Kidney (tissue), 22 donors: ENCODE measurements at regions of chr15 and their contacts with region 1.

Region 1: GRCh38 chr15:70902107-70902506 is 9.5 kb downstream of the LRRC49 start:
- DNase-seq: no peak
- H3K4me3 ChIP-seq: no peak overlapping the region
- H3K27ac ChIP-seq: no peak overlapping the region
- H3K4me1 ChIP-seq: no peaks in the 10 kb centered on the region
- H3K27me3 ChIP-seq: no peaks in the 10 kb centered on the region
- CTCF ChIP-seq: no peak

Region 2: DNA sequence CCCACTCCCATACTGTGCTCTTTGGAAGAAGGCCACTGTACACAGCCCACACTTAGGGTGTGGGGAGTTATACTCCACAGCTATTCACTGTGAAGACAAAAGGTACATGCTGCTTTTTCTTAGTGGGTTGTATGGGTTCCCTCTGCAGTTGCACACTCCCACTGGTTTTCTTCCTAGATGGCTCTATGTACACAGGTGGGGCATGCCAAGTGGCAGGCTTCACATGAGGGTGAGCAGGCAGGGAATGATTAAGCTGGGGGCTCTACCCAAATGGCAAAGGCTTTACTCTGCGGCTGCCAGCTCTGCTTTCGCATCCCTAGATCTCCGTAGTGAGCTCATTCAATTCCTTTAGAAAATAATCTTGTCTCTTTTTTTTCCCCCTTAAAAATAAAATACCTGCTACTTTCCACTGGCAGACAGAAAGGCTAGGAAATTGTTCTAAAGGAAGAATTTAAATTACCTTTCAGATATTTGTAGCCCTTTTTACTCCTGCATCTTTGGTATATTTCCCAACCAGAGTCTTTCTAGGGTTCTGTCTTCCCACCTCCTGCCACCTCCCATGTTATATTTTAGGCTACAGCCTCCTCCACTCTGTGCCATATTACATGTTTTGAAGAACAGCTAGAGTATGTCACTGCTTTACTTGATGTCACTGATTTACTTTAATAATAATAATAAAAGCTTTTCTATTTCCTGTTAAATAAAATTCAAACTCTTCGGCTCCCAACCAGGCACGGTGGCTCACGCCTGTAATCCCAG is 56.3 kb before region 1 on chr15:
- intact Hi-C with region 1: loop called (anchors 10 kb)
- DNase-seq: no peak
- H3K4me3 ChIP-seq: no peak overlapping the region
- H3K27ac ChIP-seq: no peak overlapping the region
- H3K4me1 ChIP-seq: no peaks in the 10 kb centered on the region
- H3K27me3 ChIP-seq: no peaks in the 10 kb centered on the region
- CTCF ChIP-seq: no peak